Activated CD8-positive, alpha-beta T cell treated with anti-CD3 and anti-CD28 coated beads for 36 hours (primary cell): ENCODE measurements at regions of chr5 and their contacts with region 1.

Region 1: DNA sequence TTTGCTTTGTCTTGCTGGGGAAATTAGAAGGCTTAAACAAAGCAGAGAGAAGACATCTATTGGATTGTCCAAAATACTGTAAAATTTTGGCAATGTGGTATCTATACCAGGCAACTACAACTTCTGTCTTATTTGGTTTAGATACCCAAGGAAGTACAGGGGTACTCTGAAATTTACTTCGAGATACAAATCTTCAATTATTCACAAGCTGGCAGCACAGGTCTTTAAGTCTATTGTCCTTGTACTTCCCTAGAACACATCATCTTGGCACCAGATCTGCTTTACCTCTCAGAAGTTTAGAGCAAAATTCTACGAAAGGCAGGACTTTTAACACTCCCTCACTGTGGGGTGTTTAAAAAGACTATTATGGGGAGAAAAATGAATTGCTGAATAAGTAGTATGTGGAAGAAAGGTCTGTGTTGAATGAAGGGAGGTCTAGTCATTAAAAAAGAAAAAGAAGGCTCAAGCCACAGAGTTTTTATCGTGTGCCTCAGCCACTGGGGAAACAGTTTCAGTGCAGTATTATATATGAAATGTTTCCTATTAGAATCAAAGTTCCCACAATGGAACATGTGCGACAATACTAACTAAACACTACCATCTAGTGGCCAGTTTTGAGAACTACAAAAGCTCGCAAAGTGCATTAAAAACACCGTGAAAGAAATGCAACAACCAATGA is 93.7 kb downstream of the PDE4D start:
- DNase-seq: peak; percentile 24
- ATAC-seq: peak; percentile 79
- H3K4me3 Mint-ChIP-seq: no peak overlapping the region
- H3K27ac Mint-ChIP-seq: no peak overlapping the region
- H3K4me1 Mint-ChIP-seq: no peaks in the 10 kb centered on the region
- H3K27me3 Mint-ChIP-seq: peaks cover 9% of the 10 kb centered on the region
- CTCF ChIP-seq: peak; percentile 76

Region 2: GRCh38 chr5:59390074-59390659 is 409.6 kb before region 1 on chr5:
- CTCF ChIA-PET with region 1: interaction called, 10 read pairs
- POLR2A ChIA-PET with region 1: no interaction called
- intact Hi-C with region 1: loop called (anchors 2 kb)
- DNase-seq: peak; percentile 19
- ATAC-seq: no peak
- H3K4me3 Mint-ChIP-seq: no peak overlapping the region
- H3K27ac Mint-ChIP-seq: no peak overlapping the region
- H3K4me1 Mint-ChIP-seq: no peaks in the 10 kb centered on the region
- H3K27me3 Mint-ChIP-seq: peaks cover 4% of the 10 kb centered on the region
- CTCF ChIP-seq: peak; percentile 93

Region 3: GRCh38 chr5:59496524-59497134 is 303.2 kb before region 1 on chr5:
- CTCF ChIA-PET with region 1: no interaction called
- POLR2A ChIA-PET with region 1: no interaction called
- intact Hi-C with region 1: loop called (anchors 10 kb)
- DNase-seq: peak; percentile 11
- ATAC-seq: peak; percentile 67
- H3K4me3 Mint-ChIP-seq: no peak overlapping the region
- H3K27ac Mint-ChIP-seq: no peak overlapping the region
- H3K4me1 Mint-ChIP-seq: no peaks in the 10 kb centered on the region
- H3K27me3 Mint-ChIP-seq: peaks cover 8% of the 10 kb centered on the region
- CTCF ChIP-seq: peak; percentile 50

Region 4: DNA sequence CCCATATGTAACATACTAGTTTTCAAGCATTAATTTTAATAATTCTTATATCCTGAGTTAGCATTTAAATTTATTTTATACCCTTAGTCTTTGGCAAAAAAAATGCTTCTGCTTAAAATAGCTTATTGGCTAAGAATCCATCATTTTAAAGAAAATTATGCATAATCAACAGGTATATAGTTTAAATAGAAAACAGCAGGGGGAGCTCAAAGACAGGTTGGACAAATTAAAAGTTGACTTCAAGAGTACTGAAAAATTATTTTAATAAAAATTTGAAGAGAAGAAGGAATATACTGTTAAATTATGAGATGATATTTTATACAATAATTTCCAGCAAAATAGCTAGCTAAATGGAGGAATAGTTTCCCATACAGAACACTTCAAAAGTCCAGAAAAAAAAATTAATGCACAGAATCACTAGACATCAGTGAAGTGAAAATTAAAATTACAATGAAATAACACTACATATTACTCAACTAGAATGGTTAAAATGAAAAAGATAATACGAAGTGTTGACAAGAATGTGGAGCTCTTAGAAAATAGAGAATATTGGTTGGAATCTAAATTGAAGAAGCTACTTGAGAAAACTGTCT is 293.4 kb before region 1 on chr5:
- CTCF ChIA-PET with region 1: interaction called, 14 read pairs
- POLR2A ChIA-PET with region 1: no interaction called
- intact Hi-C with region 1: no loop called
- DNase-seq: no peak
- ATAC-seq: no peak
- H3K4me3 Mint-ChIP-seq: no peak overlapping the region
- H3K27ac Mint-ChIP-seq: no peak overlapping the region
- H3K4me1 Mint-ChIP-seq: peaks cover 1% of the 10 kb centered on the region
- H3K27me3 Mint-ChIP-seq: no peaks in the 10 kb centered on the region
- CTCF ChIP-seq: peak; percentile 55

Region 5: GRCh38 chr5:59542851-59543820 is 256.7 kb before region 1 on chr5:
- CTCF ChIA-PET with region 1: no interaction called
- POLR2A ChIA-PET with region 1: no interaction called
- intact Hi-C with region 1: no loop called
- DNase-seq: no peak
- ATAC-seq: no peak
- H3K4me3 Mint-ChIP-seq: no peak overlapping the region
- H3K27ac Mint-ChIP-seq: no peak overlapping the region
- H3K4me1 Mint-ChIP-seq: no peaks in the 10 kb centered on the region
- H3K27me3 Mint-ChIP-seq: no peaks in the 10 kb centered on the region
- CTCF ChIP-seq: no peak

Region 6: DNA sequence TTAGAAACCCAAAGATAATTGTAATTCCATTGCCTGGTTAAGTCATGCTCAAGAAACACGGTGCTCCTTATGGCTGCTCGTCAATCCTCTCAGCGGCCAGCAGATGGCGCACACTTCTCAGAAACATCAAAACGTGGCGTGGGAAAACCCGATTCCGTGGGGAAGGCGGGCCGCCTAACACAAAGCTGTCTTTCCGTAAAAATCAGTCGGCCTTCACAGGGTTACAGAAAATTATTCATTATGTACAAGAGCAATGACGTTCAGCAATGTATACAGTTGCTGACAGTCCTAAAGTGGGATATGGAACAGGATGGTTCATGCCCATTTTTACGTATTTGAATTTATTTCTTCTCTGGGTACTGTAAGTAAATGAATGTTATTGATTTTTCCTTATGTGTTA is 10.2 kb after region 1 on chr5:
- CTCF ChIA-PET with region 1: interaction called, 19 read pairs
- POLR2A ChIA-PET with region 1: no interaction called
- intact Hi-C with region 1: no loop called
- DNase-seq: peak; percentile 73
- ATAC-seq: peak; percentile 49
- H3K4me3 Mint-ChIP-seq: no peak overlapping the region
- H3K27ac Mint-ChIP-seq: no peak overlapping the region
- H3K4me1 Mint-ChIP-seq: peaks cover 5% of the 10 kb centered on the region
- H3K27me3 Mint-ChIP-seq: peaks cover 10% of the 10 kb centered on the region
- CTCF ChIP-seq: peak; percentile 96

Region 7: DNA sequence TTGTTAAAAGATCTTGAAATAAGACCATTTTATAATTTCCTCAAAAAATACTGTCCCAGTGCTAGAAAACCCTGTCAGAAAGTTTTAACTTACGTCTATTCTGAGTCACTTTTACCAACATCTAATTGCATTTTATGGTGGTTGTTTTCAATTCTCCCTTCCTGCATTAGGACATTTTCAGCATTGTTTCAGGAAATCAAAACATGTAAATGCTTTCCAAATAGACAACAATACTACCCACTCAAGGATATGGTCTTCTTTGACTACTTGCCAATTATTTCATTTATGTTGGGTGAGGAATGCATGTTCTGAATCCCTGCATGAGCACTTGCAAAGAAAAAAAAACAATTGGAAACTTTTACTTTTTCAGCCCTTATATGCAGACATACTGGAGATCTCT is 378.3 kb after region 1 on chr5:
- CTCF ChIA-PET with region 1: no interaction called
- POLR2A ChIA-PET with region 1: no interaction called
- intact Hi-C with region 1: no loop called
- DNase-seq: no peak
- ATAC-seq: no peak
- H3K4me3 Mint-ChIP-seq: no peak overlapping the region
- H3K27ac Mint-ChIP-seq: no peak overlapping the region
- H3K4me1 Mint-ChIP-seq: no peaks in the 10 kb centered on the region
- H3K27me3 Mint-ChIP-seq: no peaks in the 10 kb centered on the region
- CTCF ChIP-seq: no peak